Activated CD4-positive, alpha-beta memory T cell treated with anti-CD3 and anti-CD28 coated beads, Interleukin-2, amount 10 ng/mL, durations not matched to agents 7 days and 5 days (primary cell): ENCODE measurements at regions of chr4 and their contacts with region 1.

Region 1: GRCh38 chr4:83217721-83218522 is 66.7 kb downstream of the COQ2 start:
- DNase-seq: peak; percentile 81
- H3K4me3 Mint-ChIP-seq: peak overlapping the region; percentile 22
- H3K27ac Mint-ChIP-seq: peak overlapping the region; percentile 82
- H3K4me1 Mint-ChIP-seq: peaks cover 77% of the 10 kb centered on the region
- H3K27me3 Mint-ChIP-seq: peaks cover 17% of the 10 kb centered on the region

Region 2: GRCh38 chr4:82900331-82901128 is 317.4 kb before region 1 on chr4 and contains the start of gene THAP9:
- CTCF ChIA-PET with region 1: no interaction called
- POLR2A ChIA-PET with region 1: interaction called, 14 read pairs
- DNase-seq: peak; percentile 99
- H3K4me3 Mint-ChIP-seq: no peak within 1 kb of the TSS
- H3K27ac Mint-ChIP-seq: no peak within 1 kb of the TSS
- H3K4me1 Mint-ChIP-seq: peaks cover 37% of the 10 kb centered on the region
- H3K27me3 Mint-ChIP-seq: peaks cover 9% of the 10 kb centered on the region
- total RNA-seq, gene THAP9: 2.0 to 2.4 TPM

Region 3: GRCh38 chr4:83074086-83074704 is 143.7 kb before region 1 on chr4:
- CTCF ChIA-PET with region 1: interaction called, 20 read pairs
- POLR2A ChIA-PET with region 1: interaction called, 7 read pairs
- DNase-seq: peak; percentile 58
- H3K4me3 Mint-ChIP-seq: peak overlapping the region; percentile 19
- H3K27ac Mint-ChIP-seq: peak overlapping the region; percentile 17
- H3K4me1 Mint-ChIP-seq: peaks cover 22% of the 10 kb centered on the region
- H3K27me3 Mint-ChIP-seq: peaks cover 1% of the 10 kb centered on the region

Region 4: DNA sequence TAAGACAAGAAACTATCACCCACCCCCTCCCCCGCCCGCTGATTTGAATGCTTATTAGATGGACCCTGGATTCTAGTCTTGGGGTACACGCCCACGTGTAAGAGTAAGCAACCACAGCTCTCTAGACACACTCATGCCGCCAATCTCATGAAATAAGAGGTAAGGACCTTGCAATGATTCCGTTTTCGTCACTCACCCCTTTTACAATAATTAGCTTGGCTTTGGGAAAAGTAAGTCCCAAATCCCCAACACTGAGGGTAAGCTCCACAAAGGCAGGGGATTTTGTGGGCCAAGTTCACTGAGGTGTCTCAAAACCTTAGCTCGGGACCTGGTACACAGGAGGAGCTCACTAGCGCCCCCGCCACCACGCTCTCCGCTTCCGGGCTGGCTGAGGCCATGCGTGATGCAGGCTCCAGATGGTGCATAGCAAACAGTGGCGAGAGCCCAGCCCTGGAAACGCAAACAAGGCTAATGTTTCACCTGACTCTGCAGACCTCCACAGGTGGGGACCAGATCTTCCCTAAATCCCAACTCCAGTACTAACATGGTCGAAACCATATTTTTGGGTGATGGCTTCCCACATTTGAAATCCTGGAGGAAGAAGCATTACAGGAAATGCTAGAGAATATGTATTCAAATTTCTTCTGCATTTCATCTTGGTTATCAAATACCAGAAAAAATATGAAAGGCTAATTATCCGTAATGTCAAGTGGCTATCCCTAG is 107.5 kb before region 1 on chr4:
- CTCF ChIA-PET with region 1: interaction called, 20 read pairs
- POLR2A ChIA-PET with region 1: interaction called, 123 read pairs
- DNase-seq: peak; percentile 91
- H3K4me3 Mint-ChIP-seq: peak overlapping the region; percentile 84
- H3K27ac Mint-ChIP-seq: peak overlapping the region; percentile 89
- H3K4me1 Mint-ChIP-seq: peaks cover 57% of the 10 kb centered on the region
- H3K27me3 Mint-ChIP-seq: peaks cover 3% of the 10 kb centered on the region

Region 5: DNA sequence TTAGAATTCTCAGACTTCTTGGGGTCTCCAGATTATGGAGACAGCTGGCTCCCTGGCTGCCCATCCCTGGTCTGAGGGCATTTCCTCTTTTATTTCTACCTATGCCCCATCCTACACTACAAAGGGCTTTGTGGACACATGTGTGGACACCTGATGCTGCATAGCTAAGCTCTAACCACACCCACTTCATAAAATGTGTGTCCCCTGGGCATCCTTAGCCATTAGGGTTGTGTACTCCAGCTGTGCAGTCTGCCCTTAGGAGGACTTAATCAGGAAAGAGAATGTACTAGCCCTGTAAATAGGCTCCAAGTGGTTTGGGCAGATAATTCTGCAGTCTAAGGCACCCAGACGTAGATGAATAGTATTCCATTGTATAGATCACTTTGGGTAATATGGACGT is 19.7 kb after region 1 on chr4:
- CTCF ChIA-PET with region 1: interaction called, 11 read pairs
- POLR2A ChIA-PET with region 1: interaction called, 41 read pairs
- DNase-seq: no peak
- H3K4me3 Mint-ChIP-seq: no peak overlapping the region
- H3K27ac Mint-ChIP-seq: no peak overlapping the region
- H3K4me1 Mint-ChIP-seq: peaks cover 39% of the 10 kb centered on the region
- H3K27me3 Mint-ChIP-seq: peaks cover 75% of the 10 kb centered on the region

Region 6: GRCh38 chr4:83455281-83456129 is 237.6 kb after region 1 on chr4 and contains the starts of genes HELQ and MRPS18C:
- CTCF ChIA-PET with region 1: no interaction called
- POLR2A ChIA-PET with region 1: interaction called, 10 read pairs
- DNase-seq: peak; percentile 97
- H3K4me3 Mint-ChIP-seq: peak within 1 kb of the TSS; percentile 99
- H3K27ac Mint-ChIP-seq: peak within 1 kb of the TSS; percentile 100
- H3K4me1 Mint-ChIP-seq: peaks cover 49% of the 10 kb centered on the region
- H3K27me3 Mint-ChIP-seq: no peaks in the 10 kb centered on the region
- total RNA-seq, gene HELQ: 16.4 to 17.8 TPM
- total RNA-seq, gene MRPS18C: 58.1 to 58.5 TPM